Activated CD4-positive, alpha-beta T cell treated with anti-CD3 and anti-CD28 coated beads, Interleukin-2, amount 10 ng/mL, durations not matched to agents 7 days and 5 days (primary cell): ENCODE measurements at regions of chr1 and their contacts with region 1.

Region 1: GRCh38 chr1:161136546-161136945 is 4.1 kb upstream of the DEDD start:
- DNase-seq: no peak
- H3K4me3 Mint-ChIP-seq: no peak overlapping the region
- H3K27ac Mint-ChIP-seq: no peak overlapping the region
- H3K4me1 Mint-ChIP-seq: peaks cover 18% of the 10 kb centered on the region
- H3K27me3 Mint-ChIP-seq: no peaks in the 10 kb centered on the region

Region 2: DNA sequence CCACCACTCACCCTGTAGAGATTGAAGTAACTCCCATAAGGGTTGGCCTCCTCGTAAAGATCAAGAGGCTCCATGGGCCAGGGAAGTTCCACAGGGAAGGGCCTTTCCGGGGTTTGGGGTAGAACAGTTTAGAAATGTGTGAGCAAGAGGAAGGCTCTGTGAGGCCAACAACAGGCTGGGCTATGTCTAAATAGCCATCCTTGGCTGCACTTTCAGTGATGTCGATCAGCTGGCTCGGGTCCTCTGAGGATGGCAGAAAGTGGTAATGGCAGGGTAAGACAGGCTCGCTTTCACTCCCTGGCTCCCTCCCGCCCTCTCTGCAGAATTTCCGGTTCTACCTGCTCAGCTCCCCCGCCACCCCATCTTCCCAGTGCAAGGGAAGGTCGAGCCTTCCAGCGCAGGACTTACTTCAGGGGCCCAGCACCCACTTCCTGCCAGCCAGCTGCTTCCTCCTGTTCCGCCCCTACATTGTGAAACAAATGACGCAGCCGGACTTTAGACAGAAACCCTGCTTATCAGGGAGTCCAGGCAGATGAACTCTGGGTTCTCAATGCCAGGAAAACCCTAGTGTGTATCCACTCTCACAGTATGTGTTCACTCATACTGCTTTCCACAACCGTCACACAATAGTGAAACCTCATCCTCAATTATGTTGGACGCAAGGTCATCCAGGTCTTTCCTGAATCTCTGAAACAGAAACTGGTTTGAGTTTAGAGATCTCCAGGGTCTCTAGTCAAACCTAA is 122.9 kb before region 1 on chr1:
- CTCF ChIA-PET with region 1: no interaction called
- POLR2A ChIA-PET with region 1: no interaction called
- DNase-seq: peak; percentile 61
- H3K4me3 Mint-ChIP-seq: peak overlapping the region; percentile 55
- H3K27ac Mint-ChIP-seq: peak overlapping the region; percentile 93
- H3K4me1 Mint-ChIP-seq: peaks cover 25% of the 10 kb centered on the region
- H3K27me3 Mint-ChIP-seq: no peaks in the 10 kb centered on the region

Region 3: GRCh38 chr1:161153679-161154426 is 17.3 kb after region 1 on chr1 and contains the start of gene UFC1:
- CTCF ChIA-PET with region 1: interaction called, 17 read pairs
- POLR2A ChIA-PET with region 1: interaction called, 3 read pairs
- DNase-seq: peak; percentile 90
- H3K4me3 Mint-ChIP-seq: peak within 1 kb of the TSS; percentile 90
- H3K27ac Mint-ChIP-seq: peak within 1 kb of the TSS; percentile 100
- H3K4me1 Mint-ChIP-seq: peaks cover 34% of the 10 kb centered on the region
- H3K27me3 Mint-ChIP-seq: no peaks in the 10 kb centered on the region
- total RNA-seq, gene UFC1: 115 to 120 TPM